ENCODE measurements at regions of chr6 and their contacts with region 1.

Region 1: DNA sequence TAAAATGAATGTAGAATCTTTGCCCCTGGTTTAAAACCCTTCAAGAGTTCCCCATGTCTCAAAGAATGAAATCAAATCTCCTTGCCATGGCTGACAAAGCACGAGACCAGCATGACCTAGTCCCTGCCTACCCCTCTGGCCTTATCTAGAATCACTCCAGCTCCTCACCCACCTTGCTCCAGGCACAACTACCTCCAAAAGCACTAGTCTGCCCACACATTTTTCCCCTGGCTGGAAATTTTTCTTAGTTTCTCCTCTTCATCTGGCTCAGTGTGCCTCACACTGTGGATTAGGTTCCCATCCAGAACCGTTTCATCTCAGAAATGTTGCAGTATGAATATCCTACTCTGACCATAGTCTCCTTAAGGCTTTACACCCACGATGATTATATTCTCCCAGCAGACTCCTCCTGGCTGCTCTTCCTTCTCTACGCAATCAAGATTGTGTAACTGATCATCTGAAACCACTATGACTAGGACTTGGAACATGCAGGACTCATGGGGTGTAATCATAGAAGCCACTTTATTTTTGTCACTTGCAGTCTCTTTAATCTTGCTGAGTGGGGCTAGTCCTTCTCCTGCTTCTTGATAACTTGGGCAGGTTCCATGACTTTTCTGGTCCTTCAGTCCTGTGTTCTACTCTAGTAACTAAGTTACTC is 7.8 kb upstream of the MRS2 start:
- DNase-seq: no peak
- H3K4me3 ChIP-seq: no peak overlapping the region
- H3K27ac ChIP-seq: no peak overlapping the region
- H3K4me1 ChIP-seq: no peaks in the 10 kb centered on the region
- H3K27me3 ChIP-seq: peaks cover 0 to 28% (median 3%) of the 10 kb centered on the region in 3 donors
- CTCF ChIP-seq: no peak
- EP300 ChIP-seq: no peak
- POLR2A ChIP-seq: no peak

Region 2: GRCh38 chr6:22929311-22929985 is 1465.5 kb before region 1 on chr6:
- intact Hi-C with region 1: no loop called
- DNase-seq: peak in 1 of 2 donors; percentile 47
- H3K4me3 ChIP-seq: no peak overlapping the region
- H3K27ac ChIP-seq: no peak overlapping the region
- H3K4me1 ChIP-seq: peaks cover 0 to 16% (median 4%) of the 10 kb centered on the region in 4 donors
- H3K27me3 ChIP-seq: no peaks in the 10 kb centered on the region
- CTCF ChIP-seq: no peak
- EP300 ChIP-seq: no peak
- POLR2A ChIP-seq: no peak

Region 3: GRCh38 chr6:24287239-24287638 is 107.7 kb before region 1 on chr6:
- intact Hi-C with region 1: loop called (anchors 5 kb)
- DNase-seq: no peak
- H3K4me3 ChIP-seq: no peak overlapping the region
- H3K27ac ChIP-seq: no peak overlapping the region
- H3K4me1 ChIP-seq: peaks cover 8 to 17% (median 12%) of the 10 kb centered on the region in 4 donors
- H3K27me3 ChIP-seq: no peaks in the 10 kb centered on the region
- CTCF ChIP-seq: no peak
- EP300 ChIP-seq: no peak
- POLR2A ChIP-seq: no peak

Region 4: GRCh38 chr6:24481449-24481848 is 86.5 kb after region 1 on chr6:
- intact Hi-C with region 1: no loop called
- DNase-seq: no peak
- H3K4me3 ChIP-seq: no peak overlapping the region
- H3K27ac ChIP-seq: no peak overlapping the region
- H3K4me1 ChIP-seq: no peaks in the 10 kb centered on the region
- H3K27me3 ChIP-seq: no peaks in the 10 kb centered on the region
- CTCF ChIP-seq: no peak
- EP300 ChIP-seq: no peak
- POLR2A ChIP-seq: no peak

Measured in stomach (tissue), 19 donors.